ENCODE measurements at regions of chr1 and their contacts with region 1.

Region 1: DNA sequence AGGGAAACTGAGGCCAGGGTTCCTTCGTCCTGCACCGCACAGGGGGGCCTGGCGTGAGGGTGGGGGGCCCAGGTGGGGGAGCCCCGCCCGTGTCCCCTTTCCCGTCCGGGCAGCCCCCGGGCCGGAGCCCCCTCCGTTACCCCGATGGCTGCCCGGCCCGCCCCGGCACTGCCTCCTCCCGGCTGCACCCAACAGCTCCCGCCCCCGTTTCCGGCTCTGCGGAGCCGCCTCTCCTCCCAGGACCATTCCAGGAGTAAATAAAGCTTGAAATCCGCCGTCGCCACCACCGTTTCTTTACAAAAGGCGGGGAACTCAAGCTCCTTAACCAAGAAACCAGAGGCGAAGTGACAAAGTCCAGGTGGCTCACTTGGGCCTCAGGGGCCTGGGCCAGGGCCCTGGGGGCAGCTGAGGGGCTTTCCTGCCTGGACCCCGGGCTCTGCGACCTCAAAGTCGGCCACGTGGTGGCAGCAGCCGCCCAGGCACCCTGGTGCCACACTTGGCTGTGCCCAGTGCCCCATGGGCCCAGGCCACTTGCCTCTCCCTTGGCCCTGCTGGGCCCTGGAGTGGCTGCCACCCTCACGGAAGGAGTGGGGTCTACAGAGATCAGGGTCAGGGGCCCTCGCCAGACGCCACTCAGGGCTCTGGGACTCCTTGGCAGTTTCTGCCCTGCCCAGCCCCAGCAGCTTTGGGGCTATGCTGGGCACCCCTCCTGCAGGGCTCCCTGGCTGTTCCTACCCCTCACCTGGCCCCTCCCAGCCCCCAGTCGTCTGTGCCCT is 514 bp upstream of the FAAP20 start:
- DNase-seq: peak; percentile 94
- CTCF ChIP-seq: peak; percentile 87

Region 2: DNA sequence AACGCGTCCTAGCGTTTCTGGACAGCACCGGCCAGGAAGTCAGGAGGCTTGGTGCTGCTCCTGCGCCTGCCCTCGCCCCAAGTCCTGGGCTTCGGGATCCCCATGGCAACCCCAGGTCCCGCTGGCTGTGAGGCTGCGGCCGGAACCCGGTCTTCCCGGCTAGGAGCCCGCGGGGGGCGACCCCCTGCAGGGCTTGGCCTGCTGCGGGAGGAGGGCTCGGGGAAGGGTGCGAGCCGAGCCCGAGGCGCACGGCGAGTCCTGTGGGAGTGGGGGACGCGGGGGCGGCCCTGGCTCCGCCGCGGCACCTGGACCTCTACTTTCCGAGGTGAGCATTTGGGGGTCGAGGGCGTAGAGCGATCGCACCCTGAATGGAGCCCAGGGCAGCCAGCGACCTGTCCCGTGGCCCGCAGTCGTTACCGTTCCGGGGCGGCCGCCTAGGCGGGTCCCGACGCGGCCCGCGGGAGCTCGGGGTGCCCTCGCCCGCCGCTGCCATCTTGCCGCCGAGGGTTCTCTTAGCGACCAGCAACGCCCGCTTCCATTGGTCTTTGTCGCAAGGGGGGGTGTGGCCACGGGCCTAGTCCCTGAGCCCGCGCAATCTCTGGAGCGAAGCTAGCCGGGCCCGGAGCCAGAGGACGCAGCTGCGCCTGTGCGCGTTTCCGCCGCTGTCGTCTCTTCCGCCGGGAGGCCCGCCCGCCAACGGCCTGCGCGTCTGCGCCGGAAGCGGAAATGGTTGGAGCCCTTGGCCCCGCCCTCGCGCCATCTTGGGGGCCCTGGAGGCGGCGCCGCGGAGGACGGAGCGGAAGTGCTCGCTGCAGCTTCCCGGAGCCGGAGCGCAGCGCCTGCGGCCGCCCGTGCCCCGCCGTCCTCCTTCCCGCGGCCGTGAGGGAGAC is 196.2 kb after region 1 on chr1 and contains the starts of genes MORN1 and RER1:
- in situ Hi-C with region 1: loop called (anchors 10 kb)
- DNase-seq: peak; percentile 100
- CTCF ChIP-seq: no peak

Region 3: DNA sequence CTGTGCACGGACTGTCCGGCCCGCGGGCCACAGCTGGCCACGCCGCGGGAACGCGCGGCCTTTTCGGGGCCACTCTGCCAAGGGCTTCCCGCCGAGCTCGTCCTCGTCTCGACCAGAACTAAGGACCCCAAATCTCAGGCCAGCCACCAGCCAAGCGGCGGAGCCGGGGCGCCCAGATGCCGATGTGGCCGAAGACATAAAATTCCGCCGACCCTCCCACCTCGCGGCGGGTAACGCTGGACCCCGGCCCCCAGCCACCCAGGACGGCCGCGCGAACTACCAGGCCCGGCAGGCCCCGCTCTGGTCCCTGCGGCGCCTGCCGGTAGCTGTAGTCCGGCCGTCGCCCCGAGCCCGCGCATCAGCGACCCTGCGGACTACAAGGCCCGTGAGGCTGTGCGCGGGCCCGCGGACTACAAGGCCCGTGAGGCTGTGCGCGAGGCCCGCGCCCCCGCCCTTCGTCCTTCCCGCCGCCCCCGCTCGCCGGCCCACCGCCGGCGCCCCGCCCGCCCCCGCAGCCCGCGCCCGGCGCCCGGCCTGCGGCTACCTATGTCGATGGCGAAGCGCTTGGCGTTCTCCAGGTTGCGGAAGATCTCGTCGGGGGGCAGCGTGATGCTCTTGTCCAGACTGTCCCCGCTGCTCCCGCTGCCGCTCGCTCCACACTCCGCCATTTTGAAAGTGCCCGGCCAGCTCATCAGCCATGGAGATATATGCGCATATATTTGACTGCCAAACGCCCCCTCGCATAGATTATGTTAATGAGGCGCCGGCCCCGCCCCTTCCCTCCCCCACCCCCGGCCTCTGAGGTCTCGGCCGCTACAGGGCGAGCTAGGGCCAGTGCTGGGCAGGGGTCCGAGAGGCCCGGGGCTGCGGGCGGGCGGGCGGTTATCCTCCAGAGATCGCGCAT is 331.1 kb after region 1 on chr1 and contains the start of gene PANK4:
- in situ Hi-C with region 1: loop called (anchors 25 kb)
- DNase-seq: peak; percentile 96
- CTCF ChIP-seq: no peak